OCI-LY7 (cell line): ENCODE measurements at regions of chr3 and their contacts with region 1.

Region 1: DNA sequence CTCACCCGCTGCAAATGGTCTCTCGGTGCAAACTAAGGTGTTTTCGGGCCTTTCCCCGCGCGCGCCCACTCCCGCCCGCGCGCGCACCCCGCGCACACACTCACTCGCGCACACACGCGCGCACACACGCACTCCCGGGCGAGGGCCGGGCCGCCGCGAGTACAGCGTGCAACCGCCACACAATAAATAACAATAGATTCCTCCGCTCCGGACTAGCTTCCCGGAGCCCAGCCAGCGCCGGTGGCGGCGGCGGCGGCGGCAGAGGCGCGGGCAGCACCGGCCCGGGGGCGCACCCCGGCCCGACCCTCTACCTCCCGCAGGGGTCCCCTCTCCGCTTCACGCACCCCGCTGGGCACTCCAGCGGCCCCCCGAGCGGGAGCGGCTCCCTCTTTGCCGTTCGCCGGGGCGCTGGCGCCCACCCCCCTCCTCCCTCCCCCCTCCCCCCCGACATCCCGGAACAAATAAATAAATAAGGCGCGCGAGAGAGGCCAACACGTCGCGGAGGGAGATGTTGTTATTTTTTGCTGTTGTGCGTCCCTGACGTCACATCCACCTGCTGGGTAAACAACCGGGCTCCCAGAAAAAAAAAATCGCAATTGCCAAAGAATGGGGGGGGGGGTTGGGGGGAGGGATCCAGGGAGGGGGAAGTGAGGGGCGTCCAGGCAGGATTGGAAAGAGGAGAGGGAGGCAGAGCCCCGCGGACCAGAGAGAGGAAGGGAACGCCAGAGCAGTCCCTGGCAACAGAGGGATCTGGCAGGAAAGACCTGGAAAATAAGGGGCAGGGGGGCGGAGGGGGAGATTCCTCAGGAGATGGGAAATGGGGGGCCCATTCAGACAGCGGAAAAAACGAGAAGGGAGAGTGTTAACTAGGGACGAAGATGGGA is at the start of gene FOXP1:
- DNase-seq: peak; percentile 81
- H3K4me3 ChIP-seq: peak within 1 kb of the TSS; percentile 90
- H3K27ac ChIP-seq: peak within 1 kb of the TSS; percentile 88
- H3K4me1 ChIP-seq: peaks cover 35% of the 10 kb centered on the region
- CTCF ChIP-seq: no peak
- total RNA-seq, gene FOXP1: 67.2 and 87.3 TPM in 2 replicates

Region 2: GRCh38 chr3:71006810-71007785 is 576.7 kb before region 1 on chr3:
- CTCF ChIA-PET with region 1: no interaction called
- POLR2A ChIA-PET with region 1: no interaction called
- intact Hi-C with region 1: loop called (anchors 2 kb)
- DNase-seq: peak; percentile 74
- H3K4me3 ChIP-seq: no peak overlapping the region
- H3K27ac ChIP-seq: no peak overlapping the region
- H3K4me1 ChIP-seq: peaks cover 64% of the 10 kb centered on the region
- CTCF ChIP-seq: peak; percentile 95

Region 3: GRCh38 chr3:71130471-71131374 is 453.1 kb before region 1 on chr3:
- CTCF ChIA-PET with region 1: interaction called, 3 read pairs
- POLR2A ChIA-PET with region 1: interaction called, 6 read pairs
- intact Hi-C with region 1: loop called (anchors 1 kb)
- DNase-seq: peak; percentile 84
- H3K4me3 ChIP-seq: peak overlapping the region; percentile 85
- H3K27ac ChIP-seq: peak overlapping the region; percentile 96
- H3K4me1 ChIP-seq: peaks cover 72% of the 10 kb centered on the region
- CTCF ChIP-seq: no peak

Region 4: GRCh38 chr3:71389911-71390573 is 193.8 kb before region 1 on chr3:
- CTCF ChIA-PET with region 1: no interaction called
- POLR2A ChIA-PET with region 1: interaction called, 4 read pairs
- intact Hi-C with region 1: loop called (anchors 1 kb)
- DNase-seq: peak; percentile 59
- H3K4me3 ChIP-seq: peak overlapping the region; percentile 46
- H3K27ac ChIP-seq: peak overlapping the region; percentile 90
- H3K4me1 ChIP-seq: peaks cover 78% of the 10 kb centered on the region
- CTCF ChIP-seq: no peak

Region 5: GRCh38 chr3:71456156-71456555 is 127.7 kb before region 1 on chr3:
- CTCF ChIA-PET with region 1: interaction called, 3 read pairs
- POLR2A ChIA-PET with region 1: interaction called, 37 read pairs
- intact Hi-C with region 1: loop called (anchors 1 kb)
- DNase-seq: peak; percentile 78
- H3K4me3 ChIP-seq: peak overlapping the region; percentile 63
- H3K27ac ChIP-seq: peak overlapping the region; percentile 92
- H3K4me1 ChIP-seq: peaks cover 82% of the 10 kb centered on the region
- CTCF ChIP-seq: peak; percentile 60

Region 6: GRCh38 chr3:71563827-71564226 is 20.0 kb before region 1 on chr3:
- CTCF ChIA-PET with region 1: no interaction called
- POLR2A ChIA-PET with region 1: interaction called, 55 read pairs
- intact Hi-C with region 1: loop called (anchors 1 kb)
- DNase-seq: peak; percentile 94
- H3K4me3 ChIP-seq: peak overlapping the region; percentile 60
- H3K27ac ChIP-seq: peak overlapping the region; percentile 98
- H3K4me1 ChIP-seq: peaks cover 82% of the 10 kb centered on the region
- CTCF ChIP-seq: no peak